MCF 10A (cell line): ENCODE measurements at regions of chr22 and their contacts with region 1.

Region 1: DNA sequence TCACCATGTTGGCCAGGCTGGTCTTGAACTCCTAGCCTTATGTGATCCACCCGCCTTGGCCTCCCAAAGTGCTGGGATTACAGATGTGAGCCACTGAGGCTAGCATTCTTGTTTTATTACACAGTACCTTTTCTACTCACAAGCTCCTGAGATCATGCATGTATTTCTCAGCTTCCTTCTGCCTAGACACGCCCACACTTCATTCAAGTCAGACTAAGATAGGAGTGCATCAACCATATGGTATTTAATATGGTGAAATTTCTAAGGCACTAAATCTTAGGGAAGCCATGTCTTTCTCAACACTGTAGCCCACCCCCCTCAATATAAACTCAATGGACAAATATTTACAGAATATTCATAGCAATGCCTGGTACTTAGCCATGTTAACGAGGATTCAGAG is 62.1 kb downstream of the SLC25A17 start:
- DNase-seq: no peak
- H3K4me3 Mint-ChIP-seq: no peak overlapping the region
- H3K27ac Mint-ChIP-seq: no peak overlapping the region
- H3K4me1 Mint-ChIP-seq: peaks cover 11% of the 10 kb centered on the region
- H3K27me3 Mint-ChIP-seq: no peaks in the 10 kb centered on the region
- CTCF ChIP-seq: no peak

Region 2: GRCh38 chr22:40645579-40646197 is 111.4 kb before region 1 on chr22:
- CTCF ChIA-PET with region 1: interaction called, 14 read pairs
- POLR2A ChIA-PET with region 1: interaction called, 46 read pairs
- intact Hi-C with region 1: no loop called
- DNase-seq: no peak
- H3K4me3 Mint-ChIP-seq: no peak overlapping the region
- H3K27ac Mint-ChIP-seq: peak overlapping the region; percentile 54
- H3K4me1 Mint-ChIP-seq: peaks cover 13% of the 10 kb centered on the region
- H3K27me3 Mint-ChIP-seq: no peaks in the 10 kb centered on the region
- CTCF ChIP-seq: no peak

Region 3: GRCh38 chr22:40679964-40680818 is 76.9 kb before region 1 on chr22:
- CTCF ChIA-PET with region 1: interaction called, 128 read pairs
- POLR2A ChIA-PET with region 1: interaction called, 45 read pairs
- intact Hi-C with region 1: no loop called
- DNase-seq: no peak
- H3K4me3 Mint-ChIP-seq: no peak overlapping the region
- H3K27ac Mint-ChIP-seq: no peak overlapping the region
- H3K4me1 Mint-ChIP-seq: peaks cover 12% of the 10 kb centered on the region
- H3K27me3 Mint-ChIP-seq: no peaks in the 10 kb centered on the region
- CTCF ChIP-seq: no peak

Region 4: DNA sequence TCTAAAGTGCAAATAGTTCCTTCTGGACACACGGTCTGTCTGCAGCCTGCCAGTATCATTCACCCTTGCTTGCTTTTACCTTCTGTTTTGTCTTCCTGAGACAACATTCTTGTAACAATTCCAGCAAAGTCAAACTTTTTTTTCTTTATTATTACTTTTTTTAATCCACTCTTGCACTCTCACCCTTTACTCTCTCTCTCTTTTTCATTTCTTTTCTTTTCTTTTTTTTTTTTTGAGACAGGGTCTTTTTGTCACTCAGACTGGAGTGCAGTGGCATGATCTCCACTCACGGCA is 24.1 kb before region 1 on chr22:
- CTCF ChIA-PET with region 1: interaction called, 8 read pairs
- POLR2A ChIA-PET with region 1: interaction called, 11 read pairs
- intact Hi-C with region 1: no loop called
- DNase-seq: no peak
- H3K4me3 Mint-ChIP-seq: peak overlapping the region; percentile 18
- H3K27ac Mint-ChIP-seq: peak overlapping the region; percentile 65
- H3K4me1 Mint-ChIP-seq: peaks cover 23% of the 10 kb centered on the region
- H3K27me3 Mint-ChIP-seq: no peaks in the 10 kb centered on the region
- CTCF ChIP-seq: no peak

Region 5: DNA sequence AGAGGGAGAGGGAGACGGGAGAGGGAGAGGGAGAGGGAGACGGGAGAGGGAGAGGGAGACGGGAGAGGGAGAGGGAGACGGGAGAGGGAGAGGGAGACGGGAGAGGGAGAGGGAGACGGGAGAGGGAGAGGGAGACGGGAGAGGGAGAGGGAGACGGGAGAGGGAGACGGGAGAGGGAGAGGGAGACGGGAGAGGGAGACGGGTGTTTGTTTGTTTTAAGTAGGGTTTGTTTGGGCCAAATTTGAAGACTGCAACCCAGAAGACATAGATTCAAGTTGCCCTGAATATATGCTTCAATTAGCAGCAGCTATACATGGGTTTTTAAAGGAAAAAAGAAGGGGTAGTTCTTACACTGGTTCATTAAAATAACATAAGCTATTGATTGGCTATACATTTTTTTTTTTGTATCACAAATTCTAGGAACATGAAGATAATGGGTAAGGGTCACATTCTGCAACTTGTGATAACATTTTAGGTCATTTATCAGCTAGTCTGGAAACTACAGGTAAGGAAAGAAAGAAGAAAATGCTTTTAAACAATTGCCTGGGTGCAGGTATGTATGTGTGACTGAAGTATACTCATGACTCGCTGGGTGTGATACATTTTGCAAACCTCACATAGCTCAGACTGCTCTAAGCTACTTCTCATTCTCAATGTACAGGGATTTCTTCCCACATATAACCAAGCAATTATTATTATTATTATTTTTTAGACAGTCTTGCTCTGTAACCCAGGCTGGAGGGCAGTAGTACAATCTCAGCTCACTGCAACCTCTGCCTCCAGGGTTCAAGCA is 10.4 kb before region 1 on chr22:
- CTCF ChIA-PET with region 1: interaction called, 13 read pairs
- POLR2A ChIA-PET with region 1: interaction called, 19 read pairs
- intact Hi-C with region 1: no loop called
- DNase-seq: no peak
- H3K4me3 Mint-ChIP-seq: no peak overlapping the region
- H3K27ac Mint-ChIP-seq: no peak overlapping the region
- H3K4me1 Mint-ChIP-seq: no peaks in the 10 kb centered on the region
- H3K27me3 Mint-ChIP-seq: no peaks in the 10 kb centered on the region
- CTCF ChIP-seq: no peak